Lower leg skin (tissue), 4 donors: ENCODE measurements at regions of chr22 and their contacts with region 1.

Region 1: DNA sequence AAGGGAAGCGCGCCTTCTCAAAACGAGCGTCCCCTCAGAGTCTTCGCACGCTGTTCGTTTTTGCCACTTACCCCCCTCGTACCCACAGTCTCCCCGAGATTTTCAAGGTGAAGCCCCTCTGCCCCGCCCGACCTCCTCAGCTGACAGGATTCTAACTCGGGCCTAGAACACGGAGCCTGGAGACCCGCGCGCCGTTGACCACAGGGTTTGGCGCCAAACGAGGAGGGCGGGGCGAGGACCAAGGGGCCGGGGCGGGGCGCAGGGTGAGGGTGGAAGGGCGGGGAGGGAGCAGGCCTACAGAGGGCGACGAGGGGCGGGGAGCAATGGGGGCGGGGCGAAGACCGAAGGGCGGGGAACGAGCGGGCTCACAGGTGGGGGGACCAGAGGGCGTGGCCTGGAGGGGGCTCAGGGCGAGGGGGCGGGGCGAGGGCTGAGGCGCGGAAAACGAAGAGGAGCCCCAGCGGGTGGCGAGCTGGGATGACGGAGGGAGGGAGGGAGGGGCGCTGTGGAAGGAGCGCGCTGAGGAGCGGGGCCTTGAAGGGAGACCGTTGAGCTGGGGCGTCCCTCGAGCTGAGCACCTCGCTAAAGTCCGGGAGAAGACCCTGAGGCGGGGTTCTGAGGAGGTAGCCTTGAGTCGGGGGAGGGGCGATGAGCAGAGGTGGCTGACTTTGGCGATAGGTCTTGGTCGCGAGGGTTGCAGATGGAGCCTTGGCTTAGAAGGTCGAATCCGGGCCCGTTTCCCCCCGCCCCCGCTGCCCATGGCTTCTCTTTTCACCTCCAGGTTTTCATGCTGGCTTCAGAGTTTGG is at the start of gene DMC1:
- DNase-seq: peak; percentile 91 to 99
- H3K4me3 ChIP-seq: peak within 1 kb of the TSS; percentile 50
- CTCF ChIP-seq: no peak
- POLR2A ChIP-seq: no peak
- total RNA-seq, gene DMC1: 0.22 to 3.5 (median 0.49) TPM in 3 of 4 donors, not detected in the other

Region 2: DNA sequence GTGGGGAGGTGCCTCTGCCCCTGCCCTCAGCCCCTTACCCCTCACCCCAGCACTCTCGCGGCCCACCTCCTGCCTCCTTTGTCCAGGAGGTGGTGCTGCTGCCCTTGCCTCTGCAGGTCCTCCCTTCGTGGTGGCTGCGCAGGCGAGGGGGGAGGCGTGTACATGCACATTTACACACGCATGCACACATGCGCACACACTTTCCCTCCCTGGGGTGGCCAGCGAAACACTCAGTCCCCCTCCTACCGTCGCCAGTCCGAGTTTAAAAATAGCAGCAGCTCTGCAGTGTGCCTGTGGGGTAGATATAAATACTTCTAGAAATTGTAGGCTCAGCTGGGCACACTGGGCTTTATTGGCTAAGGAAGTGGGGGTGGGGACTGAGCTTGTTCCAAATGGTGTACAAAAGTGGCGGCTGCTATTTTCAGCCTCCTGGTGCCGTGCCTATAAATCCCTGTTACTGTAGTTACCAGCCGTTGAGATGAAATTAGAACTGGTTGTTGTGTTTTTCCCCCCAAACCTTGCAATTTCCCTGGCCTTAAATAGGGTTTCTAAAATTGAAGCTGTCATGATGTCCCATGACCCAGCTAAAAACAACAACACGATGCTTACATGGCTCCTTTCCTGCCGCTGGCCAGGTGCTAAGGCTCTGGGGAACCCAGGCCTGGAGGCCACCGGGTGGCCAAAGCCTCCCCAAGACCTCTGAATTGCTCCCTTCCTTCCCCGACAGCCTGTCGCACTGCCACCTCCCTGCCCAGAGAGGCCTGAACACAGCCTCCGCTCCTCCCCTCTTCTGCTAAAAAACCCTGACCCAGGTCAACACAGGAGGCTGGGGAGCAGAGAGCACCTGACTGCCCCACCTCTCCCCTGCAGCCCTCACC is 500.6 kb before region 1 on chr22:
- intact Hi-C with region 1: loop called (anchors 10 kb)
- DNase-seq: no peak
- H3K4me3 ChIP-seq: no peak overlapping the region
- CTCF ChIP-seq: no peak
- POLR2A ChIP-seq: no peak

Region 3: DNA sequence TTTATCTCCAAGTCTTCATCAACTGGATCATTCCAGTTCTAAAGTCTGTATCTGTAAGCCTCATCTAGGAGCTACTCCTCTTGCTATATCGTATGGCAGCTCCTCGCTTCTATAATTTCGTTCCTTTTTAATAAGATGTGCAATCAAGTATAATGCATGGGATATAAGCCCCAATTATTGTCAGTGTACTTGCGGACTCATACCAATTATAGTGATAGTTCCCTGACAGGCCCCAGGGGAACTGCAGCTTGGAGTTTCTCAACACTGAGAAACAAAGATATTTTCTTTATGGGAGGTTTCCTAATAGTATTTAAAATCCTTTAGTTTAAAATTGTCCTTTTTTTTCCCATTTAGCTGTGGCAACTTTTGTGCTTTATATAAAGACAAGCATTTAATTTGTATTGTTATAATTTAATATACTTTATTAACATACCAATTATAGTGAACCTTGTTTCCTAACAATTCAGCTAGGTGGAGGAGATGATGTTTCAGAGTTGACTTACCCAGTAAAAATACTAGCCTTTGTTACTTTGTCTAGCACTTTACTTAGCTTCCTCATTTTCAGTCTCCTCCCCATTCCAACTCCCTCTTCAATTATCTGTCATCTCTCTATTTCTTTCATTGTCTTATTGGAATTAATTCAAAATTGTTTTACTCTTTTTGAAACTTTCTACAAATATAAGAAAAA is 38.8 kb before region 1 on chr22:
- intact Hi-C with region 1: loop called (anchors 2 kb)
- DNase-seq: no peak
- H3K4me3 ChIP-seq: no peak overlapping the region
- CTCF ChIP-seq: no peak
- POLR2A ChIP-seq: no peak